ENCODE measurements at regions of chr20 and their contacts with region 1.

Region 1: DNA sequence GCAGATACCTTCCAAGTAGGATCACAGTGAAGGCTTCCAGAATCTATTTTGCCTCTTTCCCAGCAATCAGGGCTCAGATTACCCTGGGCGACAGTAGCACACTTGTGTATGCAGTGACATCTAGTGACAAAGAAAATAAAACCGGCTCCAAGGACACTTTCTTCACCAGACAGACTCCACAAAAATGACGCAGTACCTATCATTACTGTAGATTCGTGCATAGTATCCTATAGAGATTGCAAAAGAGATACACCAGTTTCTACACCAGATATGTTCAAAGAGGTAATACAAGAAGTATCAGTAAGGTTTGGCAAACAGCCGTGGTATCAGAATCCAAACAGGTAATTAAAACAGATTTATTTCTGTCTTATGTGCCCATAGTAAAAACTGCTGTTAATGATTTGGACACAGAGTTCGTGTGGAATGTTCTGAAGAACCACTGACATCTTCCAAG is 600.4 kb upstream of the JAG1 start:
- DNase-seq: no peak
- H3K4me3 ChIP-seq: no peak overlapping the region
- H3K27ac ChIP-seq: no peak overlapping the region
- H3K4me1 ChIP-seq: peaks cover 0 to 12% (median 4%) of the 10 kb centered on the region in 6 donors
- H3K27me3 ChIP-seq: no peaks in the 10 kb centered on the region
- CTCF ChIP-seq: peak in 8 of 11 experiments; percentile 18 to 64 (median 46)
- POLR2A ChIP-seq: no peak

Region 2: DNA sequence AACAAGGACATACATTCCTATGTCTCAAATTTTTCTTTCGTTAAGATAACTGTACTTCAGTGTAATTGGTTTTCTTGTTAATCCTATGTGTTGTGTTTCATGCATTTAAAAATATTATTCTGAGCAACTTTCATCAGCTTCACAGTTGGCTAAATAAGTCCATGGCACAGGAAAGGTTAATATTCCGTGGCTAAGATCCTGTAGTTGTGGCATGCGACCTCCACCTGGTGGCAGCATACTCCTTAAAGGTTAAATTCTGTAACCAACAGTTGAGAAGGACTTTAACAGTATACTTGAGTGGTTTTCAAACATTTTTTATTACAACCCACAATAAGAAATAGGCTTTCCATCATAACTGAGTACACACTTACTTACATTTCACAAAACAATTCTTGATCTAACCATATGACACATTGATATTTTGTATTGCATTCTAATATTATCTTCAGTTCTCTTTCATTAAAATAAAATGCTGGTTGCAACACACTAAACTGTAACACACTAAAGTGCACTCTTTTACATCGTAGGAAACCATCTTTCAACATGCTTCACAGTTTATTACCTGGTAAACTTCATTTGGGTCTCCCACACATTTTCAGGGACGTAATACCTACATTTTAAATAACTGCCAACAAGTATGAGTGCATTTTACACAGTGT is 720.7 kb before region 1 on chr20:
- intact Hi-C with region 1: loop called (anchors 5 kb)
- DNase-seq: no peak
- H3K4me3 ChIP-seq: no peak overlapping the region
- H3K27ac ChIP-seq: no peak overlapping the region
- H3K4me1 ChIP-seq: peaks cover 0 to 45% (median 18%) of the 10 kb centered on the region in 6 donors
- H3K27me3 ChIP-seq: no peaks in the 10 kb centered on the region
- CTCF ChIP-seq: peak in 10 of 11 experiments; percentile 6 to 68 (median 62)
- POLR2A ChIP-seq: no peak

Region 3: DNA sequence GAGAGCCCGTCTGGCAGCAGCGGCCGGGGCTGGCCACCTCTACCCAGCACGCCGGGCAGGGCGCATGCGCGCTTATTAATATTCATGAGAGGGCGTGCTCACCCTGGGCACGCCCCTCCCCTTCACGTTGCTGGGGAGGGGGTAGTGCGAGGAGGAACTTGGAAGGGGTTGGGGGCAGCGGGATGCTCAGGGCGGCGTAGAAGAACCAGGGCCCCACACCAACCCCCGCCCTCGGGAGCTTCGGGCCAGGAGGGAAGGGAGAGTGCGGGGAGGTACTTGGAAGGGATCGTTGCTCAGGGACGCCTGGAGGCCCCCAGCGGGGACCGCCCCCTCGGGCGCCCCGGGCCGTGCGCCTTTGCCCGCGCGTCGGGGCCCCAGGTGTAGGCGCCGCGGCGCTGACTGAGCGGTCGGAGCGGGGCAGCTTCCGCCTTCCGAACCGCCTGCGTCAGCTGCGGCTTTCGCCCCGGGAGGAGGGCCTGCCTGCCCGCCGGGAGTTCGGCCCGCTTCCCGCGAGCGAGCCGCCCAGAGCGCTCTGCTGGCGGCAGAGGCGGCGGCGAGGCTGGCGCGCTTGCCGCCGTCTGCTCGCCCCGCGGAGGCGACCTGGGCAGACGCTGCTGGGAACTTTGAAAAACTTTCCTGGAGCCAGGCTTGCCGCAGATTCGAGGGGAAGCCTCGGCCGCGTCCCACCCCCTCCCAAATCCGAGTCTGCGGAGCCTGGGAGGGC is 600.0 kb before region 1 on chr20 and contains the start of gene JAG1:
- intact Hi-C with region 1: loop called (anchors 10 kb)
- DNase-seq: peak; percentile 95
- H3K4me3 ChIP-seq: peak within 1 kb of the TSS; percentile 59 to 86 (median 74)
- H3K27ac ChIP-seq: peak within 1 kb of the TSS; percentile 86 to 98 (median 96)
- H3K4me1 ChIP-seq: peaks cover 3 to 66% (median 59%) of the 10 kb centered on the region in 6 donors
- H3K27me3 ChIP-seq: peaks cover 0 to 87% (median 19%) of the 10 kb centered on the region in 7 donors
- CTCF ChIP-seq: no peak
- POLR2A ChIP-seq: no peak
- total RNA-seq, gene JAG1: 39.5 to 85.3 (median 67.8) TPM

Region 4: GRCh38 chr20:11544029-11544678 is 270.0 kb after region 1 on chr20:
- intact Hi-C with region 1: loop called (anchors 10 kb)
- DNase-seq: no peak
- H3K4me3 ChIP-seq: no peak overlapping the region
- H3K27ac ChIP-seq: no peak overlapping the region
- H3K4me1 ChIP-seq: peaks cover 0 to 13% (median 2%) of the 10 kb centered on the region in 6 donors
- H3K27me3 ChIP-seq: no peaks in the 10 kb centered on the region
- CTCF ChIP-seq: peak; percentile 35 to 68 (median 54)
- POLR2A ChIP-seq: no peak

Measured in spleen (tissue), 13 donors.